ENCODE measurements at regions of chr4 and their contacts with region 1.

Region 1: DNA sequence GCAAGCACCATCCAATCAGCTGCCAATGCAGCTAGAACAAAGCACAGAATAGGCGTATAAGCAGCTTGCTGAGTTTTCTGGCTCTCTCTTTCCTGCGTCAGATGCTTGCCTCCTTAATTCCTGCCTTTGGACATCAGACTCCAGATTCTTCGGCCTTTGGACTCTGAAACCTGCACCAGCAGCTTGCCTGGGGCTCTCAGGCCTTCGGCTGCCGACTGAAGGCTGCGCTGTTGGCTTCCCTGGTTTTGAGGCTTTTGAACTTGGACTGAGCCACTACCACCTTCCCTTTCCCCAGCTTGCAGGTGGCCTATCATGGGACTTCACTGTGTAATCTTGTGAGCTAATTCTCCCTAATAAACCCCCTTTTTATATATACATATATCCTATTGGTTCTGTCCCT is 6.1 kb downstream of the TMEM192 start:
- DNase-seq: no peak
- H3K4me3 ChIP-seq: no peak overlapping the region
- H3K27ac ChIP-seq: no peak overlapping the region
- H3K4me1 ChIP-seq: peaks cover 2% of the 10 kb centered on the region
- H3K27me3 ChIP-seq: no peaks in the 10 kb centered on the region
- CTCF ChIP-seq: no peak

Region 2: DNA sequence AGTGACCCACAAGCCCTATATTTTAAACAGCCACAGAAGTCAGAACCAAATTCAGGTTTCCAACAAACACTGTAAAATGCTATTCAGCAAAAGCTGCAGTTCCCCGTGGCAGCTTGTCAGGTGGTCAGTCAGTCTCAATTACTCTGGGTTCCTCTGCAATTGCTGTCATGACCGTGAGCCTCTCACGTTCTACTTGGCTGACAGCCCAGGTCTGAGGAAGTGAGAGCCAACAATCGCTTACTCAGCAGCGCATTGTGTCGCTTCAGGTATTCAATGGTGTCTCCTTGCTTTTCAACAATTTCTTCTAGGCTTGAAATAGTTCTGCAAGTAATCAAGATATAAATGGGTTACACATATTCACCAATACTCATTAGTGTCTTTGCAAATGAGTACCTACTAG is 27.0 kb before region 1 on chr4:
- CTCF ChIA-PET with region 1: interaction called, 12 read pairs
- POLR2A ChIA-PET with region 1: no interaction called
- intact Hi-C with region 1: no loop called
- DNase-seq: no peak
- H3K4me3 ChIP-seq: no peak overlapping the region
- H3K27ac ChIP-seq: no peak overlapping the region
- H3K4me1 ChIP-seq: no peaks in the 10 kb centered on the region
- H3K27me3 ChIP-seq: no peaks in the 10 kb centered on the region
- CTCF ChIP-seq: no peak